Esophagus muscularis mucosa (tissue), 4 donors: ENCODE measurements at regions of chr2 and their contacts with region 1.

Region 1: DNA sequence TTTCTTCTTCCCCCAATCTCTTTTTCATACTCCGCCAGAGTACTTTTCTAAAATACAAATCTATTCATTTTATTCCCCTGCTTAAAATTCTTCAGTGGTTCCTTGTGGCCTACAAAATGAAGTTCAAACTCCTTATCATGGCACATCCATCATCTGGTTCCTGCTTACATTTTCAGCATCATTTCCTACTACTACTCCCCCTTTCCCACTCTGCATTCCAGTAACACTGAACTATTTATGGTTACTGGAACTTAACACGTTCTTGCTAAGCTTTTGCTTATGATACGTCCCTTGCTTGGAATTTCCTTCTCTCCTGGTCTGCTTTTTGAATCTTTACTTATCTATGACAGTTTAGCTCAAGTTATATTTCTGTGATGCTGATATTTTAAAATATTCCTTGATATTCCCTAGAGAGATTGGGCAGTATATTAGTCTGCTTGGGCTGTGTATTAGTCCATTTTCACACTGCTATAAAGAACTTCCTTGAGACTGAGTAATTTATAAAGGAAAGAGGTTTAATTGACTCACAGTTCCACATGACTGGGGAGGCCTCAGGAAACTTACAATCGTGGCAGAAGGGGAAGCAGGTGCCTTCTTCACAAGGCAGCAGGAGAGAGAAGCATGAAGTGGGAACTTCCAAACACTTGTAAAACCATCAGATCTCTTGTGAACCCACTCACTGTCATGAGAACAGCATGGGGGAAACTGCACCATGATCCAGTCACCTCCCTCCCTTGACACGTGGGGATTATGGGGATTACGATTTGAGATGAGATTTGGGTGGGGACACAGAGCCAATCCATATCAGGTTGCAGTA is 53.2 kb downstream of the BMPR2 start:
- DNase-seq: no peak
- H3K4me3 ChIP-seq: no peak overlapping the region
- H3K27ac ChIP-seq: peak overlapping the region; percentile 72 to 87 (median 76)
- H3K4me1 ChIP-seq: peaks cover 23 to 63% (median 55%) of the 10 kb centered on the region in 4 donors
- H3K27me3 ChIP-seq: no peaks in the 10 kb centered on the region
- CTCF ChIP-seq: no peak
- EP300 ChIP-seq: peak; percentile 94
- POLR2A ChIP-seq: no peak

Region 2: DNA sequence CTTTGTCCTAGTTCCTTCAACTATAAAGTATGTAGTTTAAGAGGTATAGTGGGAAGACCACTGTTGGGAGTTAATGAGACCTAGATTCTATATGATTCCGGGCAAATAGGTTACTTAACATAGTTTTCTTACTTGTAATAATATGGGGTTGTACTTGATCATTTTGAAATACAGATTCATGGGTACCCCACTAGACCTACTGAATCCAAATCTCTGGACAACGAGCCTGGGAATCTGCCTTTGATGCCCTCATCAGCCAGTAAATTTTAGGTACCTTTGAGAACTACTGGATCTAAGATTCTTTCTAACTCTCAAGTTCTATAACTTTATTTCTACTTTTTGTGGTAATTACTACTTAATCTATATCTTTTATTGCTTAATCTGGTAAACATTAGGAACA is 46.7 kb before region 1 on chr2:
- intact Hi-C with region 1: loop called (anchors 5 kb)
- DNase-seq: no peak
- H3K4me3 ChIP-seq: no peak overlapping the region
- H3K27ac ChIP-seq: no peak overlapping the region
- H3K4me1 ChIP-seq: peaks cover 56 to 81% (median 79%) of the 10 kb centered on the region in 4 donors
- H3K27me3 ChIP-seq: no peaks in the 10 kb centered on the region
- CTCF ChIP-seq: no peak
- EP300 ChIP-seq: no peak
- POLR2A ChIP-seq: no peak

Region 3: DNA sequence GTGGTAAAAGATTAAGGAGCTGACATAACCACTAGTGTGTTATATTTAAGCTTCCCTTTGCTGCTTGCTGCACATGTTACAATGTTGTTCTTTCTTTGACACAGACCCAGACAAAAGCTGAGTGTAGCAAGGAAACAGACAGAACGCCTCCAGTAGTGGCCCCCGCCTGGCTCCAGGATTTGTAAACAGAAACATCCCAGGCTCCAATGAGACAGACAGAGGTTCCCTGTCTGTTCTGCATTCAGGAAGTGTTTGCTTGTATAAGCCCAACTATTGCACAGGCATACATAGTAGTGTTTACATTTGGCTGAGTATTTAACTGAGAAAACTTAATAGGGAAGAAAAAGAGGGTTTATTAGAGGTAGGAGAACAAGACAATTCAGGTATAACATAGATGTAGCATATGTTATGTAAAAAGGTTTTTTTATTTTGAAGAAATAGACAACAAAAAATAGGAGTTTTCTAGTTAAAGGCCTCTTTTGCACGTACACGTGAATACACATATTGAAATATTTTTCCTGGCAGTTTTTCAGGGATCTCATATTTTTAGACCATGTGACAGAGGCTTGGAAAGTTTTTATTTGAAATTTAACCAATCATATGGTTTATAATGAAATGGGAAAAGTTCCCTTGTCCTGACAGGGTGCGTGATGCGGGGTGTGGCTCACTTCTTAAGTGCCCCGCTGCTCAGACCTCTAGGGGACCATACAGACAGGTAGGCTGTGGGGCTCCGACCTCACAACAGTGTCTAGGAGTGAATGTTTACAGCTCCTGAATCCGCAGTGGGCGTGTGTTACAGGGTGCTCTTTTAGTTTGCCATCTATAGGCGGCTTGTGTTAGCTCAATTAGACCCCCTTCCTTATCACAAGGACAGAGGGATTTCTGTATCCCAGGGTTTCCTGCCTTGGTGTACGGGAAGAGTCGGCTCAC is 65.2 kb after region 1 on chr2:
- intact Hi-C with region 1: no loop called
- DNase-seq: no peak
- H3K4me3 ChIP-seq: no peak overlapping the region
- H3K27ac ChIP-seq: no peak overlapping the region
- H3K4me1 ChIP-seq: peaks cover 13 to 27% (median 19%) of the 10 kb centered on the region in 4 donors
- H3K27me3 ChIP-seq: no peaks in the 10 kb centered on the region
- CTCF ChIP-seq: no peak
- EP300 ChIP-seq: no peak
- POLR2A ChIP-seq: no peak

Region 4: GRCh38 chr2:202609381-202610145 is 180.2 kb after region 1 on chr2:
- intact Hi-C with region 1: no loop called
- DNase-seq: no peak
- H3K4me3 ChIP-seq: no peak overlapping the region
- H3K27ac ChIP-seq: no peak overlapping the region
- H3K4me1 ChIP-seq: no peaks in the 10 kb centered on the region
- H3K27me3 ChIP-seq: no peaks in the 10 kb centered on the region
- CTCF ChIP-seq: no peak
- EP300 ChIP-seq: no peak
- POLR2A ChIP-seq: no peak

Region 5: GRCh38 chr2:202624133-202624532 is 194.8 kb after region 1 on chr2:
- intact Hi-C with region 1: no loop called
- DNase-seq: no peak
- H3K4me3 ChIP-seq: no peak overlapping the region
- H3K27ac ChIP-seq: no peak overlapping the region
- H3K4me1 ChIP-seq: peaks cover 0 to 5% (median 2%) of the 10 kb centered on the region in 4 donors
- H3K27me3 ChIP-seq: no peaks in the 10 kb centered on the region
- CTCF ChIP-seq: no peak
- EP300 ChIP-seq: no peak
- POLR2A ChIP-seq: no peak